K562 (cell line): ENCODE measurements at regions of chr3 and their contacts with region 1.

Region 1: DNA sequence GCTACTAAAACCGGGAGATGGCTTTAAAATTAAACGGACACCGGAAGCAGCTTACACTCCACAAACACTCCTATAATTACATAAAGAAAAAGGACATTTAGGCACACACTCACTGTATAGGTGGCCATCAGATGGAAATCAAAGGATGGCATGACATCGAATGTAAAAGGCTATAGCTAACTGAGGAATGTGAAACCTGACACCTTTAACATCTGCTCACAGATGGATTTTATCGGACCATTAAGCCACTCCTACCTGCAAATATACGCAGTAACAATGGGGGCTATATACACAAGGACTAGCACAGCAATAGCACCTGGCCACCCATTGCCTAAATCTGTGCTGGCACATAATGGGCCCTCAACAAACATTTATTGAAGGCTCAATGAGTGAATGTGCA is 14.5 kb upstream of the RBSN start:
- DNase-seq: no peak
- ATAC-seq: no peak
- H3K4me3 ChIP-seq: no peak overlapping the region
- H3K27ac ChIP-seq: no peak overlapping the region
- H3K4me1 ChIP-seq: peaks cover 1 to 2% of the 10 kb centered on the region in 2 experiments; a peak in 3 of 5 replicates
- H3K27me3 ChIP-seq: peaks cover 0 to 4% of the 10 kb centered on the region in 2 experiments; a peak in 2 of 5 replicates
- CTCF ChIP-seq: no peak
- EP300 ChIP-seq: no peak
- POLR2A ChIP-seq: no peak
- RAD21 ChIP-seq: no peak

Region 2: GRCh38 chr3:15256861-15257341 is 143.4 kb after region 1 on chr3:
- CTCF ChIA-PET with region 1: no interaction called
- POLR2A ChIA-PET with region 1: interaction called, 4 read pairs
- in situ Hi-C with region 1: no loop called
- intact Hi-C with region 1: loop called (anchors 5 kb)
- DNase-seq: no peak
- ATAC-seq: no peak
- H3K4me3 ChIP-seq: no peak overlapping the region
- H3K27ac ChIP-seq: no peak overlapping the region
- H3K4me1 ChIP-seq: peaks cover 0 to 20% of the 10 kb centered on the region in 2 experiments; a peak in 4 of 5 replicates
- H3K27me3 ChIP-seq: no peaks in the 10 kb centered on the region
- CTCF ChIP-seq: no peak
- EP300 ChIP-seq: no peak
- POLR2A ChIP-seq: 0 out of 2 replicates have a peak, but pooled peaks have one; percentile 10
- RAD21 ChIP-seq: no peak

Region 3: DNA sequence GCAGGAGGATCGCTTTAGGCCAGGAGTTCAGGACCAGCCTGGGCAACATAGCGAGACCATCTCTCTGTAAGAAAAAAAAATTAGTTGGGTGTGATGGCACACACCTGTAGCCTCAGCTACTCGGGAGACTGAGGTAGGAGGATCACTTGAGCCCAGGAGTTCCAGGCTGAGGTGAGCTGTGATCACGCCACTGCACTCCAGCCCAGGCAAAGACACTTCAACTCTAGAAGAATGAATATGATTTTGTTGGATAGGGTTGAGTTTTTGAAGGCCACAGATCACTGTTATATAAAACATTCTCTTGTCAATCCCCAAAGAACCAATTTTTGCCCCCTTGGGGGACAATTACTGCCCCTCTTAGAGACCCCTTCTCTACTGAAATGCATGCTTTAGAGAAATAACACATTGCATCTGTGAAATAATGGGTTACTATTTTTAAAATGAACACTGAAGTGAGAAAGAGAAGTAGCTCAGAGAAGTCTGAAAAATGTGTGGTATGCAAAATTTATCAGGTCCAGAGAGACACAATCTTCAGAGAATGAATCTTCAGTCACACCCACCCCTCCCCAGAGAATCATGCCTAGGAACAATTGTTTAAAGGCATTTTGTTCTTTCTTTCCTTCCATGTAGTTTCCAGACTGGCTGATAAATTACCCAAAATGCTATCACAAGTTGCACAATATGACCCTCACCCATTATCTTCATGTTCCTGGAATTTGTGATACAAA is 271.2 kb after region 1 on chr3:
- CTCF ChIA-PET with region 1: no interaction called
- POLR2A ChIA-PET with region 1: no interaction called
- in situ Hi-C with region 1: loop called (anchors 10 kb)
- intact Hi-C with region 1: loop called (anchors 2 kb)
- DNase-seq: no peak
- ATAC-seq: no peak
- H3K4me3 ChIP-seq: no peak overlapping the region
- H3K27ac ChIP-seq: no peak overlapping the region
- H3K4me1 ChIP-seq: peaks cover 0 to 8% of the 10 kb centered on the region in 2 experiments; a peak in 2 of 5 replicates
- H3K27me3 ChIP-seq: no peaks in the 10 kb centered on the region; a peak in 1 of 5 replicates
- CTCF ChIP-seq: no peak
- EP300 ChIP-seq: no peak
- POLR2A ChIP-seq: no peak
- RAD21 ChIP-seq: no peak